Activated CD4-positive, alpha-beta T cell treated with anti-CD3 and anti-CD28 coated beads for 36 hours (primary cell): ENCODE measurements at regions of chr7 and their contacts with region 1.

Region 1: DNA sequence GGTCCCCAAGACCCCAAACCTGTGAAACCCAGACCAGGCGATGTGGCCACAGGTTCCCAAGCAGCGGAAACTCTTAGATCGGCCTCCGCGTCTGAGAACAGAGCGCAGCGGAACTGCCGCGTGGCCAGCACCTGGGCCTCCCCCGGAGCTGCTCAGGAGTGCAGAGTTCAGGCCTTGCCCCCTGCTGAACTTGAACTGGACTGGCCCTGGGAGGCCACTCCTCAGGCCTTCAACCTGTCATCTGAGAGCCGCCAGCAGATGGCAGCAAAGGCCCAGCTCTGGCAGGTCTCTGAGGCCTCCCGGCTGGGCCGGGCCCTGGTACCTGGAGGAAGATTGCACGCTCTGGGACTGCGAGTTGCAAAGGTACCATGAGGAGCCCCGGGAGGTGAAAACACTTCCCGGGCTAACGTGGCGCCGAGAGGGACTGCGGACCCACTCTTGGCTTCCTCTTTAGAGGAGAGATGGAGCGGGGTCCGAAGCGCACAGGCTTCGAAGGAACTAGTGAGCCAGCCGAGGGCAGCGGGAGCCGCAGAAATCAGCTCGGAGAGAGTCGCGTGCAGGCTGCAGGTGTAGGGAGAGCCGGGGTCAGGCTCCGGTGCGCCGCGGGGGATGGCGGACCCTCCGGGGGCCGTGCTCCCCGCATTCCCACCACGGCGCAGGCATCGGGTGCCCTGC is 89.1 kb downstream of the PAXIP1 start:
- DNase-seq: peak; percentile 94
- ATAC-seq: peak; percentile 99
- H3K4me3 Mint-ChIP-seq: peak overlapping the region; percentile 56
- H3K27ac Mint-ChIP-seq: no peak overlapping the region
- H3K4me1 Mint-ChIP-seq: peaks cover 5% of the 10 kb centered on the region
- H3K27me3 Mint-ChIP-seq: peaks cover 10% of the 10 kb centered on the region

Region 2: GRCh38 chr7:154578336-154578735 is 335.4 kb before region 1 on chr7:
- CTCF ChIA-PET with region 1: no interaction called
- POLR2A ChIA-PET with region 1: no interaction called
- intact Hi-C with region 1: no loop called
- DNase-seq: no peak
- ATAC-seq: no peak
- H3K4me3 Mint-ChIP-seq: no peak overlapping the region
- H3K27ac Mint-ChIP-seq: no peak overlapping the region
- H3K4me1 Mint-ChIP-seq: no peaks in the 10 kb centered on the region
- H3K27me3 Mint-ChIP-seq: no peaks in the 10 kb centered on the region

Region 3: DNA sequence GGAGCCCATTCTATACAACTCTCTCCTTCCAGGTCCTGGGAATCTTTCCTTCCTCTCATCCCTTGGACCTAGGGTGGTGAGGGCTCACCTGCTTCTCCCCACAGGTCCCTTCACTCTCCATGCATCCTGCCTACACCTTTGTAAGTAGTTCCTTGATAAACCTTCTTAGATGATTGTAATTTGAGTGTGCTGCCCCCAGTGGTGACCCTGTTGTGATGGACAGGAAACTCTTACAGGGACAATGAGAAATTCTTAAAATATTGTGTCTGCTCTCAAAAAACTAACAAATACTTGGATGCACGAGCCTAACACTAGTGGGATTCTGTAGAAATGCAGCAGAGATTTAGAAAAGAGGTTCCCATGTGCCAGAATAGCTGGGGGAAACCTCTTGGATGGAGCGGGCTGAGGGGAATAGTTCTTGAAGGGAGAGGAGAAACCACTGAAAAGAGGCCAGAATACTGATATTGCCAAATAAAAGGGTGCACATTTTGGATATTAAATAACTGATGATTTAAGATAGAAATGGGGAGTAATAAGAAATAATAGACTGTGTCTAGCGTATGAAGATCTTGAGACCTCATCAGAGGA is 95.9 kb after region 1 on chr7:
- CTCF ChIA-PET with region 1: interaction called, 3 read pairs
- POLR2A ChIA-PET with region 1: no interaction called
- intact Hi-C with region 1: loop called in 1 of 2 experiments (anchors 5 kb)
- DNase-seq: peak; percentile 57
- ATAC-seq: peak; percentile 47
- H3K4me3 Mint-ChIP-seq: no peak overlapping the region
- H3K27ac Mint-ChIP-seq: no peak overlapping the region
- H3K4me1 Mint-ChIP-seq: peaks cover 3% of the 10 kb centered on the region
- H3K27me3 Mint-ChIP-seq: no peaks in the 10 kb centered on the region